T-cell (primary cell): ENCODE measurements at regions of chr1 and their contacts with region 1.

Region 1: DNA sequence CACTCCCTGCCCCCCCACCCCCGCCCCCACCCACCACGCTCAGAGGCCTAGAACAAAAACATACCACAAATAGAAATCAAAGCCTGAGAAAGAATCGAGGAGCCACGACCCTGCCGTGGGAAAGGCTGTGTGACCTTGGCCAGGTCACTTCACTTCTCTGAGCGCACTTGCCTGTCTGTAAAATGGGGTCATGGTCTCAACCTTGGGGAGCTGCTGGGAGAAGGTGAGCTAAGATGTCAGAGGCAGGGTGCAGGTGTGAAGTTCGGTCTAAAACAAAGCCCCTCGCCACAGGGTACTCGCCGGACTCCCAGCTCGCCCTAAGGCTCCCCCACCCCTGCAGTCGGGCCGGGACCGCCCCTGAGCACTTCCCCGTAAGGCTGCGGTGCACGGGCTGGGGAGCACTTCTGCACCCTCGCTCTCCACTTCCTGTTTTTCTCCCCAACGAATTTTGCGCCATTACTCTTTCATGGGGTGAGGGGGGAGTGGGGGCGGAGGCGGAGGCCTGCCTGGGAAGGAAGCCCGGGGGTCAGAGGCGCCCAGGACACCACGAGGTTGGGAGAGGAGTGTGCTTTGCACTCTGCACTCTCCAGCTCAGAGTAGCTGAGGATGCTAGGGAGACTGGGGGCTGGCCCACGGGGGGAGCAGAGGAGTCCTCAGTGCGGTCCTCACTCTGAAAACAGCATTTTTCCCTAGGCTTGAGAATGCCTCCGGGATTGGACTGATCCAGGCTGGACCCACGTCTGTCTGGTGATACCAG is 21.9 kb upstream of the PIK3CD start:
- DNase-seq: peak; percentile 64 to 87 (median 75)
- ATAC-seq: peak; percentile 56 to 67 (median 64)
- H3K4me3 ChIP-seq: peak overlapping the region; percentile 62 to 87
- H3K4me3 Mint-ChIP-seq: peak overlapping the region; percentile 88 to 97 (median 90)
- H3K27ac ChIP-seq: peak overlapping the region; percentile 81
- H3K27ac Mint-ChIP-seq: peak overlapping the region; percentile 98 to 99
- H3K4me1 ChIP-seq: peaks cover 34 to 80% of the 10 kb centered on the region in 2 experiments
- H3K4me1 Mint-ChIP-seq: peaks cover 62 to 77% (median 74%) of the 10 kb centered on the region in 3 donors
- H3K27me3 ChIP-seq: peaks cover 0 to 3% of the 10 kb centered on the region in 2 experiments
- H3K27me3 Mint-ChIP-seq: no peaks in the 10 kb centered on the region

Region 2: DNA sequence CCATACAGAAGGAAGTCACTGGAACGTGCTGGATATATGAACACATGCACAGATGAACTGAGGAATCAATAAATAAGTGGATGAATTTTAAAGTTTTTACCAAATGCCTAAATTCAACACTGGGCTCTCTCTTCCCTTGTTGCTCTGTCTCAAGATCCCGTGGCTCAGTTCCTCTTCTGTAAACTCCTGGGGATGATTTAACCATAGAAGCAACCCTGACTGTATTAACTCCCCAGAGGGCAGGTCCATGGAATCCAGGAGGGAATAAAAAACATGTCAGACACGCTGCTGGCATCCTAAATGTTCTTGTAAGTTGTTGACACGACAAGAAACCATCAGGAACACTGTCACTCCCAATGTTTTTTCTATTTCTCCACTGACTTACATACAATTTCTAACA is 455.4 kb before region 1 on chr1:
- CTCF ChIA-PET with region 1: no interaction called
- POLR2A ChIA-PET with region 1: no interaction called
- DNase-seq: no peak
- ATAC-seq: no peak
- H3K4me3 ChIP-seq: no peak overlapping the region
- H3K4me3 Mint-ChIP-seq: no peak overlapping the region
- H3K27ac ChIP-seq: no peak overlapping the region
- H3K27ac Mint-ChIP-seq: no peak overlapping the region
- H3K4me1 ChIP-seq: no peaks in the 10 kb centered on the region
- H3K4me1 Mint-ChIP-seq: no peaks in the 10 kb centered on the region
- H3K27me3 ChIP-seq: peaks cover 0 to 22% of the 10 kb centered on the region in 2 experiments
- H3K27me3 Mint-ChIP-seq: peaks cover 0 to 15% of the 10 kb centered on the region in 2 donors

Region 3: DNA sequence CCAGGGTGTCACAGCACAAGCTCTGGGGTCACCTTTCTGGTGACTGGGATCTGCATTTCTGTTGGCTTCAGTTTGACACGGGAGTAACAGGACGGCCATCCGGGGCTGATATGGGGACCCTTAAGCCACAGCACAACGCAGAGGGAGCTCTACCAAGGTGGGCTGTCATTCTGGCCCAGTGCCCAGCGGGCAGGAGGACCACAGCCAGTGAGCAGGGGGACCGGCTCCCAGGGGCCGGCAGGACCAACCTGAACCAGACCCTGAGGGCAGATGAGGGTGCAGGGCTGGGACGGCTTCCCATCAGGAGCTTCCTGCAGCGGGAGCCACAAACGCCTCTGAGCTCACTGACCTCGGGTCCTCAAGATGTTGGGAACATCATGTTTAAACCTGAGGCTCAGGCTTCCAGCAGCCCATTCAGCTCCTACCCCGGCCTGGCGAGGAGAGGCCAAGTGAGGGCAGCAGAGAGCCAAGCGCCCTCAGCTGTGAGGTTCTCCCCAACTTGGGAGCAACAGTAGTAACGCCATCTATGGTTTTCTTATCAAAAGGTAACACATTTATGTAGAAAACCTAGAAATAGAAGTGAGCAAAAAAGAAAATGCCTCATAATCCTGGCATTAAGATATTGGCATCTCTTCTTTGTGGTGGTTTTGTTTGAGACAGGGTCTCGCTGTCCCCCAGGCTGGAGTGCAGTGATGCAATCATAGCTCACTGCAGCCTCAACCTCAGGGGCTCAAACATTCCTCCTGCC is 14.1 kb before region 1 on chr1:
- CTCF ChIA-PET with region 1: no interaction called
- POLR2A ChIA-PET with region 1: no interaction called
- DNase-seq: peak in 32 of 35 experiments; percentile 21 to 70 (median 48)
- ATAC-seq: peak; percentile 74 to 92 (median 89)
- H3K4me3 ChIP-seq: no peak overlapping the region
- H3K4me3 Mint-ChIP-seq: no peak overlapping the region
- H3K27ac ChIP-seq: no peak overlapping the region
- H3K27ac Mint-ChIP-seq: no peak overlapping the region
- H3K4me1 ChIP-seq: peaks cover 0 to 6% of the 10 kb centered on the region in 2 experiments
- H3K4me1 Mint-ChIP-seq: no peaks in the 10 kb centered on the region
- H3K27me3 ChIP-seq: peaks cover 0 to 20% of the 10 kb centered on the region in 2 experiments
- H3K27me3 Mint-ChIP-seq: peaks cover 0 to 5% of the 10 kb centered on the region in 2 donors

Region 4: DNA sequence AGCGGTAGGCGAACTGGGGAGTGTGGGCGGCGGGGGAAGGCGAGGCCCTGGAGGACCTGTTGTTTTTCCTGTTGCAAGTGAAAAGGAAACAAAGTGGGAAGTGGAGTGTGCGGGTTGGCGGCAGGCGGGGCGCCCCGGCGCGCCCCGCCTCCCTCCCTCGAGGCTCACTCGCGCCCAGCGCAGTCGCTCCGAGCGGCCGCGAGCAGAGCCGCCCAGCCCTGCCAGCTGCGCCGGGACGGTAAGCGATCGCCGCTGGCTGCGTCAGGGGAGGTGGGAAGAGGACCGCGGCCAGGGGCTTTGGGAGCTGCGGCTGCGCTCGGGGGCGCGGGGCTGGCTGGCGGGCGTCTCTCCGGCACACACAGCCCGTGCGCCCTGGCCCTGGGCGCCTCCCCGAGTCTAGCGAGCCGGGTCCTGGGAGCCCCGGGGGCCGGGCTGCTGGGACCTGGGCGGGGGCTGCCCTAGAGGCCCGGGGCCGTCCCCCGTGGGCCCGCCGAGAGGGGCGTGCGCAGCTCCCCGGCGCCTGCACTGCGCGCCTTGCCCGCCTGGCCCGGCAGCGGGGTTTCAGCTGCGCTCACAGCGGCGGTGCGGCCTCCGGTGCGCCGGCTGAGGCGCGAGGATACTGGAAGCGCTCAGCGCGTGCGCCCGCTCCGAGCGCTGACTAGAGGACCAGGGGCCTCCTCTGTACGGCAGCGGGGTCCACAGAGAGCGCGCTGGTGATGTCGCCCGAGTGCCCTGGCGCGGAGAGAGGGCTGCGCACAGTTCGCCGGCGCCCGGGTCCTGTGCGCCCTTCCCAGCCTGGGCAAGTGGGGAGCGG is 22.1 kb after region 1 on chr1 and contains the start of gene PIK3CD:
- CTCF ChIA-PET with region 1: interaction called, 7 to 60 read pairs
- POLR2A ChIA-PET with region 1: interaction called, 3 to 21 read pairs
- DNase-seq: peak in 23 of 35 experiments; percentile 3 to 66 (median 43)
- ATAC-seq: peak; percentile 34 to 55 (median 50)
- H3K4me3 ChIP-seq: peak within 1 kb of the TSS; percentile 70 to 82
- H3K4me3 Mint-ChIP-seq: peak within 1 kb of the TSS; percentile 97 to 100 (median 100)
- H3K27ac ChIP-seq: peak within 1 kb of the TSS; percentile 58
- H3K27ac Mint-ChIP-seq: peak within 1 kb of the TSS; percentile 98 to 99
- H3K4me1 ChIP-seq: peaks cover 6 to 77% of the 10 kb centered on the region in 2 experiments
- H3K4me1 Mint-ChIP-seq: peaks cover 73 to 76% (median 73%) of the 10 kb centered on the region in 3 donors
- H3K27me3 ChIP-seq: no peaks in the 10 kb centered on the region
- H3K27me3 Mint-ChIP-seq: no peaks in the 10 kb centered on the region
- total RNA-seq, gene PIK3CD: 246 to 313 (median 280) TPM